Right ventricle myocardium inferior (tissue), 1 donor: ENCODE measurements at regions of chr9 and their contacts with region 1.

Region 1: DNA sequence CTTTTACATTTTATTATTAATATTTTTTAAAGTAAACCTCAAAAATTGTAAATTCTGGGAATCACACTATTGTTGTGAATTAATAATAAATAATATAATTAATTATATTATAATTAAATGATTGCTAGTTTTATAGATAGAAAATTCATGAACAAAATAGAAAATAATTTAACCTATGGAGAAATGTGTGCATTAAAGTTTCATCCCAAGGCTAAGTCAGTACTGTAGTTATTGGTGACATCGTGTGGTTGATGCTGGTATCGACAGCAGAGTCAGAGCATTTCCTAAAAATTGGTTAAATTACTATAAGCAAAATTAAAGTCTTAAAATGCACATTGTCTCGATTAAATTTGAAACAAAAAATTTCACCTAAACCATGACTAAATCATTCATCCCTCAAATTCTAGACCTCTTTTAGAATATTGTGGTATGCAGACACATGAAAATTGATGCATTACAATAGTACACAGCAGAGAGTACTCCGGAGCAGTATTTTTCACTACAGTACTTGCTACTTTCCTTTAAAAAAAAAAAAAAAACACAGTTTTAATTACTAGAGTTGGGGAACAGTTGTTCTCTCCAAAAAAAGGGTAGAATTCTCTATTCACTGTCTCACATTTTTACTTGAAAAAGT is 73.9 kb downstream of the RORB start:
- DNase-seq: no peak
- ATAC-seq: no peak

Region 2: GRCh38 chr9:74309654-74310053 is 261.3 kb before region 1 on chr9:
- intact Hi-C with region 1: loop called (anchors 5 kb)
- DNase-seq: no peak
- ATAC-seq: no peak